GM18951 (cell line): ENCODE measurements at regions of chr18 and their contacts with region 1.

Region 1: DNA sequence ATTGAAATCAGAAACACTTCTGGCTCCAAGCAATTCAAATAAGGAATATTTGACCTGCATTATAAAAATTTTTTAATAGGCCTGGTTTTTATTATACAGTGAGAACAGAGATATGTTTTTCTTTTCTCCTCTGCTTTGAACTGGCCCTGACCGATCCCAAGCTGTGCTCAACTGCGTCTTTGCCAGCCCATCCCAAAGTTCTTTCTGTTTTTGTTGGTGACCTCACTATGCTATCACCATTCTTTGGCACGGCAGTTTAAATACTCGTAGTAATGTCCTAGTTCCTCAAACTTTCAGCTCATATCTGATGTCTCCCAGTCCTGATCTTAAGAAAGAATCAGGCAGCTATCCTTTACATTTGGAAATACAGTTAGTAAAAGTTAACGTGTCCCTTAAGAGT is 42.3 kb upstream of the NETO1 start:
- POLR2A ChIP-seq: no peak

Region 2: DNA sequence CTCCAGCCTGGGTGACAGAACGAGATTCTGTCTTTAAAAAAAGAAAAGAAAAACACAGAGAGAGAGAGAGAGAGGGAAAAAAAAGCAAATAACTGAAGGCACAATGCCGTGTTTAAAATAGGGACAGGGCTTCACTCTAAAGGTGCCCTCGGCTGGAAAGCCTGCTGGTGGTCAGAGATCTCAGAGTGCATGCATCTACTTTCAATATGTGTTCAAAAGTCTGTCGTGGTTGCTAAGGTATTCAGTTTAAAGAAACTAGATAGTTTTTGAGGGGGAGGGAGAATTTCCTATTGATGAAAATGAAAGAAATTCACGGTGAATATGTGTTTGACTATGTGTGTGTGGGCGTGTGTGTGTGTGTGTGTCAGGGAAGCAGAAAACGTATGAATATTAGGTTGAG is 354.9 kb before region 1 on chr18:
- in situ Hi-C with region 1: loop called (anchors 10 kb)
- POLR2A ChIP-seq: no peak

Region 3: DNA sequence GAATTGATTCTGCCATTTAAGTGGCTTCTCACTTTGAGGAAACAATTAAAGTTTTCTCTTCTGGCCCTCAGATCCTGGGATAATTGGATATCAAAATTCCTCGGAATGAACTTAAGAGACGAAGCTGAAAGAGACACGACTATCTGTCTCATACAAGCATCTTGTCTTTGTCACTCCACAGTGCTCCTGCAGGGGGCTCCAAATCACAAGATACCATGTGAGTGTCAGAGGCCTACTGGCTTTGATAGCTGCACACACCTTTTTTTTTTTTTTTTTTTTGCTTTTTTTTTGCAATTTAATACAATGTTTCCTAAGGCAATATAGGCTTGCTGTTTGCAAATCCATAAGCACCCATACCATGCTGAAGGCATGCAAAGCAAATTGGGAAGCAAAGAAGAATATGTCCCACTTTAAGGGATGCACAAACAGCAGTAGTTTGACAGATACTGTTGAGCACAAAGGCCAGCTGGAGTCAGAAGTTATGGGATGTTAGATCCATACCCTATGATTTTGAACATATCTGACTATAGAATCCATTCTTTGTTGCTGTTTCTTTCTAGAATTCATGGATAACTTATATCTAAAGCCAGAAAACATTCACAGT is 257.0 kb before region 1 on chr18:
- in situ Hi-C with region 1: no loop called
- POLR2A ChIP-seq: no peak

Region 4: DNA sequence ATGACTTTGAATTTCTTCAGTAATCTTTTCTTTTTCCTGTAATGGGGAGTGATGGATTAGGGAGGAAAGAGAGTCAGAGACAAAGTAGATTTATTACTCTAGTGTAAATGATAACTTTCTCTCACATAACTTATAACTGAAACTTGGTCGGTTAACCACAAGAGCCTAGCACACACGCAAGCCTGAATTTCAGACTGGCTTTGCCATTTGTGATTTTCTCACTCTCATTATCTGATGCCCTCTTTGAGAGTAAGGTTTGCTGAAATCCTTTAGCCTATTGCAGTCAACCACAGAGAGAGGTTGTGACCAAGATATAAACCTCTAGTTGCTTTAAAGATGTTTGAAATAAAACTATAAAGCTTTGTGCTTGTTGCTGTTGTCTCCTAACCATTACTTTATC is 75.6 kb after region 1 on chr18:
- in situ Hi-C with region 1: no loop called
- POLR2A ChIP-seq: no peak